Tibial artery (tissue), 4 donors: ENCODE measurements at regions of chr1 and their contacts with region 1.

Region 1: DNA sequence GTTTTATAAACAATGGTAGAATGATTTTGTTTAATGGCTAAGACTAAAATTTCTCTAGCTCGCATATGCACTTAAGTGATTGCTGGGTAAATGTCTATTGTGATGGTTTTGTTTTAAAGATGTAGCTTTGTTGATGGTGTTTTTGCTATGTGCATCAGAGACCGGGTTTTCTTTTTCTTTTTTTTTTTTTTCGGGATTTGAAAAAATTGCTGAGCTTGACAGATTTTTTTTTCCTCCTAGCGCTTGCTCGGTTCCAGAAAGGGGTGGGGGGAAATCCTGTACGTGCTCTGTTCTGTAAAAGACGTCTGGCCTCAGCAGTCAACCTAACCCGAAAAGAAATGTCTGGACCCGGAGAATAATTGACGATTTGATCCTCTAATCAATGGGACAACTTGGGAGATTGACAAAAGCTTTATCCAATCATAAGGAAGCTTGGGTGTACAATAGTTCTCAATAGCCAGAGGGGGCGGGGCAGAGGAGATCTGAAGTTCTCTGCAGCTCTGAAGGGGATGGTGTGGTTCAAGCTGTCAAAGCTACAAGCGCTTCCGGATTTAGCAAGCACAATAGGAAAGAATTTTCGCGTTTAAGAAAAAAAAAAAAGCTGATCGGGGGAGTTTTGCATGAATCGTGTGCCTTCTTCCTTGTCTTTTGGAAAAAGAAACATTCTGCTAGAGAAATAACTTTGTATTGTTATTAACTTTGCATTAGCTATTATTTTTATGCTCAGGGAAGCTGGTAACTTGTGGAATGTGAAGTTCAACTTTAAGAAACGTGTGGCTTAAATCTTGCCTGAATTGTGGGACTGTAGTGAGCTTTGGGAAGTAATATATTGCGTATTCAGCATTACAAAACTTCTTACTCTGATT is 4.5 kb upstream of the NFIA start:
- DNase-seq: peak; percentile 94 to 97
- H3K4me3 ChIP-seq: peak overlapping the region; percentile 58 to 71
- H3K27ac ChIP-seq: peak overlapping the region; percentile 84 to 86
- H3K4me1 ChIP-seq: peaks cover 0 to 48% (median 30%) of the 10 kb centered on the region in 4 donors
- H3K27me3 ChIP-seq: no peaks in the 10 kb centered on the region
- CTCF ChIP-seq: no peak

Region 2: DNA sequence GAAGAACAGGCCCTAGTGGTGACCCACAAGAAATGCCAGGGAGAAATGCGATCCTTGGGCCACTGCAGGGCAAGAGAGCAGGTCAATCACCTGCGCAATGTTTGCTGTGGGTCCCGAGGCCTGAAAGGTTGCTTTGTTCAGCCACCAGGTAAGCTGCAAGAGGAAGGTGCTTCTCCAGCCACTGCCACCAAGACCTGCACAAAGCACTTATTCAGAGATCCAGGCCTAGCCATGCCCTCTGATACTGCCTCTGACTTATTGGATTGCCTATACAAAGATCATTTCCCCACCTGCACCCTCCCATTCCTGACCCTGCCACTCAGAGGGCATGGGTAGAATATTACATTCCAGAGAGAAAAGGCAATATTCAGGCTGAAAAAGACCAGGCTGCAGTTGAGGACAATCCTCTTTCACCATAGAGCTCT is 344.9 kb before region 1 on chr1:
- intact Hi-C with region 1: no loop called
- DNase-seq: no peak
- H3K4me3 ChIP-seq: no peak overlapping the region
- H3K27ac ChIP-seq: no peak overlapping the region
- H3K4me1 ChIP-seq: no peaks in the 10 kb centered on the region
- H3K27me3 ChIP-seq: no peaks in the 10 kb centered on the region
- CTCF ChIP-seq: no peak

Region 3: DNA sequence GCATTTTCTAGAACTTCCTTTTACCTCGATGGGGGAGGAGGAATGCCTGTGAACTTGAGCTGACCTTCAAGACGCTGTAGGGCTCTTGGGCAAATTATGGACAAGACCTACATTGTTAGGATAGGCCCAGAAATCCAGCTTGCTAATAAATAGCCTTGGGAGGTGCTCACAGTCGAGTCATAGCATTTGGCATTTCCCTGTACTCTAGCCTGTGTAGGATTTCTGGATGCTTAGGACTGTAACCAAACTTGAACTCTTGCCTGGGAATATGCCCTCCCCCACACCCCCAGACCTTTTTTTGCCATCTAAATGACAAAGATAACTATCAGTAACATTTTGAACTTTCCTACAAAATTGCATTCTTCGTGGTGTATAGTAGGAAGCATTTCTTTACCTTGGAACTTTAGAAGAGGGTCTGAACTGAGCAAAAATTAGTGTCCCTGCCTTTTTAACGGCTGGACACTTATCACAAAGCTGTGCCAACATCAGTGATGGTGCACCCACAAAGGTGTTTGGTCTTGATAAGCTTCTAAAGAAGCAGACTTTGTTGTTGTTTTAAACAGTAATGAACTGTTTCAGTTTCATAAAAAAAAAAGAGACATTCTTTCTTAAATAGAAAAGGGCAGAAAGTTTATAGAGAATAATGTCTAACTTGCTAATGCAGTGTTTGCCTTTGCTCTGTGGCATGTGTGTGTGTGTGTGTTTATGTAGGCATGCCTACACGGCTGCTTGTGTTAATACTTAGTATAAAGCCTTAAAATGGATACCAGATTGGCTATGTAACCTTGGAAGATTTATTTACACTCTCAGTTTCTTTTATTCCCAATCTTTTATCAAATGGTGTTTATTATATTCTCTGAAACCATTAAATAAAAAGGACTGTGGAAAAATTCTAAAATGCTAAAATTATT is 92.7 kb after region 1 on chr1:
- intact Hi-C with region 1: no loop called
- DNase-seq: no peak
- H3K4me3 ChIP-seq: no peak overlapping the region
- H3K27ac ChIP-seq: peak overlapping the region; percentile 62 to 65
- H3K4me1 ChIP-seq: peaks cover 0 to 82% (median 52%) of the 10 kb centered on the region in 4 donors
- H3K27me3 ChIP-seq: no peaks in the 10 kb centered on the region
- CTCF ChIP-seq: no peak

Region 4: DNA sequence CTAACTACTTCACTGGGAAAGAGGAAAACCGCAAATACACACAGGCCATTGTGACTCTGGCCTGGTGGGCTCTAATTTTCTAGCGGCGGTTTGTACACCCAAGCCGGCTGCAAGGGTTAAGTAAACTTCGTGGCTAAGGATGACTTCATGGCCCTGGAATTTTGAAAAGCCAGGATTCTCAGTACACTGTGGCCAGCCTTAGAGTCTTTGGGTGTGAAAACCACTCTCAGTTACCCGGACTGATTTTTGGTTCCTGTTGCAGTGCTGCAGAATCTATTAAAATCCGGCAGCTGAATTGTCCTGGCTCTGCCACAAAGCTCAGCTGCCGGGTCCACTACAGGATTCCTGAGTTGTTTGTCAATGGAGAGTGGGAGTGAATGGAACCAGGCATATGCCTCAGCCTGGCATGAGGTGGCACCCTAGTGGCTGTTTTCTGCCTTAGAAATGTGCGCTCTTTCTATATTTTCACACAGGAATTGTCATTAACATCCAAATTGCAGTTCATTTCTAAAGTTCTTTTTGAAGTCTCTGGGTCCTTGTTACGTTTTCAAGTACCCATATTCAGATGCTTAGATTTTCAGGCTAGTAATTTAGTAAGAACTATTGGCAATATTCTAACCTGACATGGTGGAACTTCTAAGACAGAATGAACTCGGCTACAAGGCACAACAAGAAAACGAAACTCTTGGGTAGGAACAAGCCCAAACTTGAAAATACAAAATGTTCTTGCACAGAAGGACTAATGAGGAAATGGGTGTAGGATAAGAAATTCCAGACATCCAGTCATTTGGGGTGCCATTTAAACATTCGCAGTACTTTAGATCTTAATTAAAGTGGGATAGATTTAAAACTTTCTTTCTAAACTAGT is 260.3 kb after region 1 on chr1:
- intact Hi-C with region 1: loop called (anchors 10 kb)
- DNase-seq: peak; percentile 81 to 91
- H3K4me3 ChIP-seq: peak overlapping the region; percentile 26 to 34
- H3K27ac ChIP-seq: peak overlapping the region; percentile 67 to 80
- H3K4me1 ChIP-seq: peaks cover 0 to 57% (median 26%) of the 10 kb centered on the region in 4 donors
- H3K27me3 ChIP-seq: no peaks in the 10 kb centered on the region
- CTCF ChIP-seq: peak; percentile 83 to 90